Ascending aorta (tissue), 2 donors: ENCODE measurements at regions of chr10 and their contacts with region 1.

Region 1: DNA sequence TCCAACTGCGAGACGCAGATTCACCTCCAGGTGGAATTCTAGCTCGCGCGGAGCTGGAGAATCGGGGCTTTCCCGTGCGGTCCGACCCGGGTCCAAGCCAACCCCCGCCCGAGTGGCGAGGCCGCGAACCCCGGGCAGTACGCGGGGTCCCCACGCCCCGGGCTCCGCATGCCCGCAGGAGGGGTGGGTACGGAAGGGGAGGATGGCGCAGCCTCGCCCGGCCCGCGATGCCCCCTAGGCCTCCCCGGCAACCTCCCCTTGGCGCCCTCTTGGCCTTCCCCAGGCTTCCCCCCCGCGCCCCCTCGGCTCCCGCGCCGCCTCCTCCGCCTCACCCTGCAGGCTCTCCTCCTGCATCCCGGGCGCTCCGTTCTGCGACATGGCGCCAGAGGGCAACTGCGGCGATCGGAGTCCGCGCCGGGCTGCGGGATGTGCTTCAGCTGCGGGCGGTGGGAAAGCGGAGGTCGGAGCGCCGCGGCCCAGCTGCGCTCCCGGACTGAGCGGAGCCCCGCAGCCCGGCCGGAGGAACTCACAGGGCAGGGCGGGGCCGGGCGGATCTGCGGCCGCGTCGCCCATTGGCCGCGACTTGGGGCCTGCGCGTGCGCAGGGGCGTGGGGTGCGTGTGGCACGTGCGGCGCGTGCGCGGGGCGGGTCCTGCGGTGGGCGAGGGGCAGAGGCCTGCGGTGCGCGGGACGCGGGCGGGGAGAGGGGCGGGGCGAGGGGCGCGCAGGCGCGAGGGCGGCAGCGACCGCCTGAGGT is at the start of gene BNIP3:
- DNase-seq: peak; percentile 82 to 96
- H3K4me3 ChIP-seq: peak within 1 kb of the TSS; percentile 92 to 99
- H3K27ac ChIP-seq: peak within 1 kb of the TSS; percentile 48 to 67
- H3K4me1 ChIP-seq: peaks cover 6 to 11% of the 10 kb centered on the region in 2 donors
- H3K27me3 ChIP-seq: no peaks in the 10 kb centered on the region
- CTCF ChIP-seq: peak in 2 of 3 experiments; percentile 6 to 9
- total RNA-seq, gene BNIP3: 18.3 TPM

Region 2: GRCh38 chr10:131891196-131891928 is 90.2 kb before region 1 on chr10:
- intact Hi-C with region 1: no loop called
- DNase-seq: no peak
- H3K4me3 ChIP-seq: no peak overlapping the region
- H3K27ac ChIP-seq: no peak overlapping the region
- H3K4me1 ChIP-seq: no peaks in the 10 kb centered on the region
- H3K27me3 ChIP-seq: no peaks in the 10 kb centered on the region
- CTCF ChIP-seq: no peak

Region 3: GRCh38 chr10:131937836-131938235 is 43.8 kb before region 1 on chr10:
- intact Hi-C with region 1: loop called (anchors 2 kb)
- DNase-seq: peak in 1 of 2 donors; percentile 42
- H3K4me3 ChIP-seq: no peak overlapping the region
- H3K27ac ChIP-seq: no peak overlapping the region
- H3K4me1 ChIP-seq: peaks cover 0 to 3% of the 10 kb centered on the region in 2 donors
- H3K27me3 ChIP-seq: no peaks in the 10 kb centered on the region
- CTCF ChIP-seq: no peak

Region 4: GRCh38 chr10:131947631-131948347 is 33.8 kb before region 1 on chr10:
- intact Hi-C with region 1: loop called (anchors 2 kb)
- DNase-seq: peak in 1 of 2 donors; percentile 42
- H3K4me3 ChIP-seq: no peak overlapping the region
- H3K27ac ChIP-seq: no peak overlapping the region
- H3K4me1 ChIP-seq: peaks cover 4 to 21% of the 10 kb centered on the region in 2 donors
- H3K27me3 ChIP-seq: no peaks in the 10 kb centered on the region
- CTCF ChIP-seq: no peak

Region 5: GRCh38 chr10:132516771-132517725 is 535.4 kb after region 1 on chr10:
- intact Hi-C with region 1: no loop called
- DNase-seq: peak; percentile 87 to 98
- H3K4me3 ChIP-seq: peak overlapping the region; percentile 37 to 45
- H3K27ac ChIP-seq: peak overlapping the region; percentile 97
- H3K4me1 ChIP-seq: peaks cover 24 to 58% of the 10 kb centered on the region in 2 donors
- H3K27me3 ChIP-seq: no peaks in the 10 kb centered on the region
- CTCF ChIP-seq: no peak